ENCODE measurements at regions of chr6 and their contacts with region 1.

Region 1: GRCh38 chr6:115896538-115897129 is 164.1 kb downstream of the FRK start:
- DNase-seq: peak; percentile 38
- H3K4me3 Mint-ChIP-seq: no peak overlapping the region
- H3K27ac Mint-ChIP-seq: no peak overlapping the region
- H3K4me1 Mint-ChIP-seq: peaks cover 12% of the 10 kb centered on the region
- H3K27me3 Mint-ChIP-seq: no peaks in the 10 kb centered on the region
- CTCF ChIP-seq: peak; percentile 62

Region 2: GRCh38 chr6:114096561-114097172 is 1800.0 kb before region 1 on chr6:
- CTCF ChIA-PET with region 1: no interaction called
- intact Hi-C with region 1: loop called (anchors 10 kb)
- DNase-seq: peak; percentile 21
- H3K4me3 Mint-ChIP-seq: no peak overlapping the region
- H3K27ac Mint-ChIP-seq: no peak overlapping the region
- H3K4me1 Mint-ChIP-seq: peaks cover 10% of the 10 kb centered on the region
- H3K27me3 Mint-ChIP-seq: no peaks in the 10 kb centered on the region
- CTCF ChIP-seq: peak; percentile 54

Region 3: DNA sequence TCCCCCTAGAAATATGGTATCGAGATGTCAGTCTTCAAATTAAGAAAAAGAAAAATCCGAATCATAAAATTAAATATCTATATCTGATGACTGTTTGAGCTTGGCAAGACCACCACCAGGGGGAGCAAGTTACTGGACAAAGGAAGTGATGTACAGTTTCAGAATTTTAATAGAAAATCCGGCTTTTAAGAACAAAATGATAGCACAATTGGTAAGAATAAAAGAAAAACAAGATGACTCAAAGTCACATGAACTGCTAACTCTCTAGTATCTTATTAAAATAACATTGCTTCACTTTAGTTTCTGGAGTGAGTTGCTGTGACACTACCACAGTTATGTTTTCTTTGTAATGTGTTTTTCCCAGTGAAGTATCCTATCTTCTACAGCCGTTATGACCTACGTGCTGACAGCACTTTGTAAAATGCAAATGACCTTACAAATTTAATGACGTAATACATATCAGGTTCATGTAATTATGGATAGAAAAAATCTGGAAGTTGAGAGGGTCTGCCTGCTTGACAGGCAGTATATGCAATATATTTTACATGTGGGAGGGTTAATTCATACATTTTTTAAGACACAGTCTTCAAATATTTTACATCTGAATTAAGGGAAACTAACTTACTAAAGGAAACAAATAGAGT is 1148.5 kb before region 1 on chr6:
- CTCF ChIA-PET with region 1: no interaction called
- intact Hi-C with region 1: loop called (anchors 2 kb)
- DNase-seq: peak; percentile 76
- H3K4me3 Mint-ChIP-seq: no peak overlapping the region
- H3K27ac Mint-ChIP-seq: no peak overlapping the region
- H3K4me1 Mint-ChIP-seq: no peaks in the 10 kb centered on the region
- H3K27me3 Mint-ChIP-seq: no peaks in the 10 kb centered on the region
- CTCF ChIP-seq: peak; percentile 72

Region 4: GRCh38 chr6:115001731-115002350 is 894.8 kb before region 1 on chr6:
- CTCF ChIA-PET with region 1: no interaction called
- intact Hi-C with region 1: loop called (anchors 10 kb)
- DNase-seq: no peak
- H3K4me3 Mint-ChIP-seq: no peak overlapping the region
- H3K27ac Mint-ChIP-seq: no peak overlapping the region
- H3K4me1 Mint-ChIP-seq: peaks cover 14% of the 10 kb centered on the region
- H3K27me3 Mint-ChIP-seq: no peaks in the 10 kb centered on the region
- CTCF ChIP-seq: no peak

Region 5: GRCh38 chr6:115643755-115644154 is 252.9 kb before region 1 on chr6:
- CTCF ChIA-PET with region 1: no interaction called
- intact Hi-C with region 1: loop called (anchors 10 kb)
- DNase-seq: peak; percentile 59
- H3K4me3 Mint-ChIP-seq: no peak overlapping the region
- H3K27ac Mint-ChIP-seq: no peak overlapping the region
- H3K4me1 Mint-ChIP-seq: peaks cover 14% of the 10 kb centered on the region
- H3K27me3 Mint-ChIP-seq: no peaks in the 10 kb centered on the region
- CTCF ChIP-seq: peak; percentile 14

Region 6: GRCh38 chr6:116244284-116244683 is 347.6 kb after region 1 on chr6:
- CTCF ChIA-PET with region 1: no interaction called
- intact Hi-C with region 1: no loop called
- DNase-seq: no peak
- H3K4me3 Mint-ChIP-seq: no peak overlapping the region
- H3K27ac Mint-ChIP-seq: no peak overlapping the region
- H3K4me1 Mint-ChIP-seq: no peaks in the 10 kb centered on the region
- H3K27me3 Mint-ChIP-seq: no peaks in the 10 kb centered on the region
- CTCF ChIP-seq: no peak